ENCODE measurements at regions of chr1 and their contacts with region 1.

Region 1: DNA sequence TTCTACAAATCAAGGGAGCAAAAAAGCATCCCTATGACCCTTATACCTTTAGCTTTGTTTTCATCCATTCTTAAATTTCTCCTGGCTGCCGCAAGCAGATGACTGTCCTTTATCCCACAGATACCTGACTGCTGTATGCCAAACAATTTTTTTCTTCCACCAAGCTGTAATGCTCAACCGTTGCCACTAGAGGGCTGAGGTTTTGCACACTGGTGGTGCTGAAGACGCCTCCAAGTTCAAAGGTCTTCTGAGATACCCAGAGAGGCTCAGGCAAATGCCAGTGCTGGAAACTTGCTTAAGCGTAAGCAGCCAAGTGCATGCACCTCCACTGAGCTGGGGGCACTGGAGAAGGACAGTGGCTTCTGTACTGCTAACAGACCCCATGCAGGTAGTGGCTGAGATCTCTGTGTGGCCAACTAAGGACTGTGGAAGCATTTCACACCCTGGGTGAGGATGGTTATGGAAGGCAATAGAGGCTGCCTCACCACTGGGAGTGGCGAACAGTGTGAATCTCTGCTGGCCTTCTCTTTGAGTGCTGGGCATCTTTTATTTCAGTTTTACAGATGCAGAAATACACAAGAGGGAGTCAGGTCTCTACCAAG is 28.5 kb downstream of the CNIH3 start:
- ATAC-seq: peak; percentile 59 to 85 (median 65)
- H3K4me3 ChIP-seq: no peak overlapping the region
- H3K27ac ChIP-seq: no peak overlapping the region
- H3K4me1 ChIP-seq: peaks cover 0 to 13% of the 10 kb centered on the region in 2 donors

Region 2: GRCh38 chr1:223189903-223190724 is 1454.5 kb before region 1 on chr1:
- in situ Hi-C with region 1: no loop called
- ATAC-seq: peak in 2 of 8 experiments; percentile 19 to 48
- H3K4me3 ChIP-seq: no peak overlapping the region
- H3K27ac ChIP-seq: no peak overlapping the region
- H3K4me1 ChIP-seq: no peaks in the 10 kb centered on the region

Region 3: DNA sequence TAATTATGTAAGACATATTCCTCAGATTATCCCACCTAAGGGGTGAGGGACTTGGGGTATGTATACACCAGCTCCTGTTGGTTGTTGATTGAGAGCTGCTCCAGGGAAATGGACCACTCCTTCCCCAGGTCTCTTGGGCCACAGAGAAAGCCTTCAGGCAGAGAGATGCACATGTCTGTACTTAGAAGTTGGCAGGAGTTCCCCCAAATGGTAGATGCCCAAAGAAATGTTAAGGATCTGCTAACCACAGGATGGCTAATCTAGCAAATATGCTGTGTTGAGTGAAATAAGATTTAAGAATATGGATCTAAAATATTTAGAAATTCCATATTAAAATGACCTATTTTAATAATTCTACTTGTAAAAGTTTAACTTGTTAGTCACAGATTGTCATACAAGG is 184.0 kb after region 1 on chr1:
- in situ Hi-C with region 1: loop called in 1 of 9 experiments (anchors 25 kb)
- ATAC-seq: no peak
- H3K4me3 ChIP-seq: no peak overlapping the region
- H3K27ac ChIP-seq: no peak overlapping the region
- H3K4me1 ChIP-seq: no peaks in the 10 kb centered on the region

Region 4: DNA sequence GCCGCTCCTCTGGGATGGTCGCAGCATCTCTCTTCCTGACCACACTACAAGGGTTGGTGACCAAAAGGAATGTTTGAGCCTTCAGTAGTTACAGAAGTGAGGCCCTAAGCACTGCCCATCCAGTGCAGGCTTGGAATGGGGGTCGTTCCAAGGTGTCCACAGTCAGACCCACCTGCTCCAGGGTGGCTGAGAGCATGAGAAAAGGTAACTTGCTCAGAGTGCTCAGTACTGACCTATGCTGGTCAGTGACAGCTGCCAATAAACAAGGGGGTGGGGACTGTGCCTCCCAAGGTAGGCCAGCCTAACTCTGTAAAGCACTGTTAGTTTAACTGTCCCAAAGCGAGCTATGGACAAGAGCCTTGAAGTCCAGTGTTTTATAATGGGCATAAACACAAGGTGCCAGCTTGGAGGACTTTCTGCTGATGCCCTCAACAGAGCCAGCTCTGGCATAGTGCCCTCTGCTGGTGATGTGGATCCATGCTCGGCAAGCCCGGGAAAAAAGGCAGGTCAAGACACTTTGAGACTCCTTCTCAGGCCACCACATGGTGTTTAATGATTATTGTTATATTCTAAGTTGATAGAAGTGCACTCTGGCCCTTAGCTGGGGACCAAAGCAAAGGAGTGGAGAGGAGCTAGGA is 206.7 kb after region 1 on chr1:
- in situ Hi-C with region 1: loop called in 2 of 9 experiments (anchors 10 to 25 kb)
- ATAC-seq: peak; percentile 37 to 82 (median 58)
- H3K4me3 ChIP-seq: no peak overlapping the region
- H3K27ac ChIP-seq: no peak overlapping the region
- H3K4me1 ChIP-seq: peaks cover 2 to 3% of the 10 kb centered on the region in 2 donors

Measured in motor neuron (in vitro differentiated cells).